Activated naive CD4-positive, alpha-beta T cell treated with anti-CD3 and anti-CD28 coated beads for 36 hours (primary cell): ENCODE measurements at regions of chr7 and their contacts with region 1.

Region 1: GRCh38 chr7:101856473-101857357 is 39.3 kb downstream of the CUX1 start:
- DNase-seq: peak; percentile 81
- H3K4me3 Mint-ChIP-seq: peak overlapping the region; percentile 83
- H3K27ac Mint-ChIP-seq: peak overlapping the region; percentile 82
- H3K4me1 Mint-ChIP-seq: peaks cover 39% of the 10 kb centered on the region
- H3K27me3 Mint-ChIP-seq: no peaks in the 10 kb centered on the region

Region 2: DNA sequence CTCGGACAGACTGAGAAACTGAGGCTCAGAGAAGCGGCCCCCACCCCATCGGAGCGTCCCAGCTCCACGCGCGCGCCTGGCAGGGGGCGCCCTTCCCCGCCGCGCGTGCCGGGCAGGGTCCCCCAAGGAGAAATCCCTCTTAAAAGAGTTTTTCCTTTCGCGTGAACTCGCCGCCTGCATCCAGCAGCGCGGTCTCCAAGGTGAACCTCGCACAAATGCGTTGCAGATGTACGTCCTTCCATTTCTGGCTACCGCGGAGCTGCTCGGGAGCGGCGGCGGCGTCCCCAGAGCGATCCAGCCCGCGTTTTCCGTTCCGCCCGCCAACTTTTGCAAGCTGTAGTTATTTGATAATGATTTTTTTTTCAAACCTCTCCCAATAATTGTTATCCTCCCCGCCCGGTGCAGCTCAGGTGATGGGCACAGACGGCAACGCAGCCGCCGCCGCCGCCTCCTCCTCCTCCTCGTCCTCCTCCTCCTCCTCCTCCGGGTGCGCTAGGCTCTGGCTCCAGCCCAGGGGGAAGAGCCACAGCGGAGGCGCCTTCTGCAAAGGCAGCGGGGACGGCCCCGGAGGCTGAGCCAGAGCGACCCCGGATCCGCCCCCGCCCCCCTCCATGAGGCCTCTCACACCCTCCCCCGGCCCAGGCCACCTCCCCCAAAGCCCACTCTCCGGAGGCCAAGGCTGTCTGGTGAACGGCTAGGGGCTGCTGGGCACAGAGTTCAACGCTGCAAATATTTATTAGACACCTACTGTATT is 113.3 kb before region 1 on chr7:
- CTCF ChIA-PET with region 1: no interaction called
- intact Hi-C with region 1: loop called (anchors 5 kb)
- DNase-seq: peak; percentile 63
- H3K4me3 Mint-ChIP-seq: peak overlapping the region; percentile 75
- H3K27ac Mint-ChIP-seq: no peak overlapping the region
- H3K4me1 Mint-ChIP-seq: peaks cover 13% of the 10 kb centered on the region
- H3K27me3 Mint-ChIP-seq: no peaks in the 10 kb centered on the region

Region 3: DNA sequence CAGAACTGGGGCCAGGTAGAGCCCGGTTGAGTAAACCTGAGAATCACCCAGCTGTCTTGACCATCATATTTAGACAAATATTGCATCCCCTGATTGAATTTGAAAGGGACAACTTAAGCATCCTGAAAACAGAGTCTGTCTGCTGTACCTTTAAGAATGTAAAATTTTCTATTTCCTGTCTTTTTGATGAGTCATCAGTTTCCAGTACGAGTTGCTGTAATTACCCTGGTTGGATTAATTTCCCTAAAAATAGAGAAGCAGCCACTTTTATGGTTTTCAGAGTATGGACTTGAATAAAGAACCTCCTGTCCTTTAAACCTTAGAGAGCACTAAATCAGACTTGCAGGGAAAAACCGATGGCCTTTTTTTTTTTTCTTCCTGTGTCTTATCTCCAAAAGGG is 265.3 kb after region 1 on chr7:
- CTCF ChIA-PET with region 1: no interaction called
- intact Hi-C with region 1: loop called (anchors 5 kb)
- DNase-seq: no peak
- H3K4me3 Mint-ChIP-seq: no peak overlapping the region
- H3K27ac Mint-ChIP-seq: peak overlapping the region; percentile 50
- H3K4me1 Mint-ChIP-seq: peaks cover 13% of the 10 kb centered on the region
- H3K27me3 Mint-ChIP-seq: no peaks in the 10 kb centered on the region